ENCODE measurements at regions of chr5 and their contacts with region 1.

Region 1: GRCh38 chr5:61313960-61314681 is 17.9 kb upstream of the ZSWIM6 start:
- DNase-seq: peak; percentile 97
- H3K4me3 ChIP-seq: no peak overlapping the region
- H3K27ac ChIP-seq: peak overlapping the region; percentile 95
- H3K4me1 ChIP-seq: peaks cover 57% of the 10 kb centered on the region
- H3K27me3 ChIP-seq: no peaks in the 10 kb centered on the region
- CTCF ChIP-seq: no peak
- POLR2A ChIP-seq: peak; percentile 73

Region 2: GRCh38 chr5:61301341-61302199 is 12.6 kb before region 1 on chr5:
- CTCF ChIA-PET with region 1: interaction called, 15 read pairs
- POLR2A ChIA-PET with region 1: no interaction called
- dilution Hi-C with region 1: no loop called
- intact Hi-C with region 1: loop called (anchors 1 kb)
- DNase-seq: peak; percentile 29
- H3K4me3 ChIP-seq: no peak overlapping the region
- H3K27ac ChIP-seq: no peak overlapping the region
- H3K4me1 ChIP-seq: peaks cover 23% of the 10 kb centered on the region
- H3K27me3 ChIP-seq: no peaks in the 10 kb centered on the region
- CTCF ChIP-seq: no peak
- POLR2A ChIP-seq: no peak